CD4-positive, alpha-beta memory T cell (primary cell): ENCODE measurements at regions of chr5 and their contacts with region 1.

Region 1: GRCh38 chr5:36089989-36090564 is 23.4 kb upstream of the UGT3A2 start:
- DNase-seq: peak in 1 of 5 donors; percentile 9
- H3K4me3 ChIP-seq: no peak overlapping the region
- H3K4me3 Mint-ChIP-seq: no peak overlapping the region
- H3K27ac ChIP-seq: no peak overlapping the region
- H3K27ac Mint-ChIP-seq: no peak overlapping the region
- H3K4me1 ChIP-seq: no peaks in the 10 kb centered on the region
- H3K4me1 Mint-ChIP-seq: peaks cover 0 to 1% (median 0%) of the 10 kb centered on the region in 4 donors
- H3K27me3 ChIP-seq: no peaks in the 10 kb centered on the region
- H3K27me3 Mint-ChIP-seq: peaks cover 4 to 10% of the 10 kb centered on the region in 2 donors

Region 2: DNA sequence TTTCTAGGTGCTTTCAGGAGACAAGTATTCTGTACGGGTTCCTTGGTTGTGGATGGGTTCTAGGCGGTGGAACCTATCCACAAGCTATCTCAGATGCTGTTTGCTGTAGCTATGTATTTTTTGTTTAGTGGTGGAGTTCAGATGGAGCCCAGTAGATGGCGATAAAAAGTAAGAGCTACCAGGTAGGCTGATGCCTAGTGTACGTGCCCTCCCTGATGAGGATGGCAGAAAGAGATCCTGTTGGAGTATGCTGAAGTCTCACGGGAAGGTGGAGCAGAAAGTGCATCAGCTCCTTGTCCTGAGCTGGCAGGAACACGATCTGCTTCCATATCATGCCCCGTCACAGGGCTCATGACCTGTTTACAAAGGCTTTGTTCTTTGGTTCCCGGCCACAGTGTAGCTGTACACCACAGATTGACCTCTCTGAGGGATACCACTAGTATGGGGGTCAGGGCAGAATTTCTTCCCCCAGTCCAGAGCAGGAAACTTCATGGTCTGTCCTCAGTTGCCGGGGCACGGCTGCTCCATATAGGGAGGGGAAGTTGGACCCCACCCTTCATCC is 10.8 kb before region 1 on chr5:
- CTCF ChIA-PET with region 1: interaction called, 12 read pairs
- POLR2A ChIA-PET with region 1: no interaction called
- intact Hi-C with region 1: no loop called
- DNase-seq: peak in 4 of 5 donors; percentile 14 to 33 (median 29)
- H3K4me3 ChIP-seq: no peak overlapping the region
- H3K4me3 Mint-ChIP-seq: no peak overlapping the region
- H3K27ac ChIP-seq: no peak overlapping the region
- H3K27ac Mint-ChIP-seq: no peak overlapping the region
- H3K4me1 ChIP-seq: no peaks in the 10 kb centered on the region
- H3K4me1 Mint-ChIP-seq: no peaks in the 10 kb centered on the region
- H3K27me3 ChIP-seq: no peaks in the 10 kb centered on the region
- H3K27me3 Mint-ChIP-seq: peaks cover 12 to 34% of the 10 kb centered on the region in 2 donors